Transverse colon (tissue), 4 donors: ENCODE measurements at regions of chr15 and their contacts with region 1.

Region 1: DNA sequence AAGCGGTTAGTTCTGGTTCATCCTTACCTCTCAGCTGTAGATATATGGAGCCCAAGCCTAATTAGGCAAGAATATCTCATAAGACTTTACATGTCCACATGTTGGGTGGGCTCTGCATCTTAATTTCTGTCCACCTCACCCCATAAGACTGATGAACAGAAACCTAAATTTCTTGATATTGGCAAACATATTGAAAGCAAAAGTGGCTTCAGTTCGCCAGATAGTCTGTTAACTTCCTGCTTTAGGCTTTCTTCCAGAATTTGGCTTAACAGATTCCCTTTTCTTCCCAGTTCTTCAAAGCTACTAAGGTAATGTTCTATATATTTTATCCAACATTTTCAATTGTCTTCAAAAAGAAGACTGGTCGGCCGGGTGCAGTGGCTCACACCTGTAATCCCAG is 19.7 kb downstream of the GABPB1 start:
- DNase-seq: no peak
- H3K4me3 ChIP-seq: no peak overlapping the region
- H3K27ac ChIP-seq: no peak overlapping the region
- H3K4me1 ChIP-seq: no peaks in the 10 kb centered on the region
- H3K27me3 ChIP-seq: no peaks in the 10 kb centered on the region
- CTCF ChIP-seq: no peak
- EP300 ChIP-seq: no peak
- POLR2A ChIP-seq: no peak

Region 2: GRCh38 chr15:52303093-52303772 is 1968.0 kb after region 1 on chr15:
- in situ Hi-C with region 1: no loop called
- intact Hi-C with region 1: loop called (anchors 5 kb)
- DNase-seq: no peak
- H3K4me3 ChIP-seq: no peak overlapping the region
- H3K27ac ChIP-seq: no peak overlapping the region
- H3K4me1 ChIP-seq: peaks cover 0 to 12% (median 2%) of the 10 kb centered on the region in 4 donors
- H3K27me3 ChIP-seq: no peaks in the 10 kb centered on the region
- CTCF ChIP-seq: no peak
- EP300 ChIP-seq: no peak
- POLR2A ChIP-seq: no peak